ENCODE measurements at regions of chr17 and their contacts with region 1.

Region 1: GRCh38 chr17:75109407-75110233 is at the start of gene ARMC7:
- DNase-seq: peak; percentile 95
- ATAC-seq: peak; percentile 82
- H3K4me3 Mint-ChIP-seq: peak within 1 kb of the TSS; percentile 79
- H3K27ac Mint-ChIP-seq: peak within 1 kb of the TSS; percentile 92
- H3K4me1 Mint-ChIP-seq: peaks cover 28% of the 10 kb centered on the region
- H3K27me3 Mint-ChIP-seq: no peaks in the 10 kb centered on the region
- total RNA-seq, gene ARMC7: 6.7 to 7.7 TPM

Region 2: DNA sequence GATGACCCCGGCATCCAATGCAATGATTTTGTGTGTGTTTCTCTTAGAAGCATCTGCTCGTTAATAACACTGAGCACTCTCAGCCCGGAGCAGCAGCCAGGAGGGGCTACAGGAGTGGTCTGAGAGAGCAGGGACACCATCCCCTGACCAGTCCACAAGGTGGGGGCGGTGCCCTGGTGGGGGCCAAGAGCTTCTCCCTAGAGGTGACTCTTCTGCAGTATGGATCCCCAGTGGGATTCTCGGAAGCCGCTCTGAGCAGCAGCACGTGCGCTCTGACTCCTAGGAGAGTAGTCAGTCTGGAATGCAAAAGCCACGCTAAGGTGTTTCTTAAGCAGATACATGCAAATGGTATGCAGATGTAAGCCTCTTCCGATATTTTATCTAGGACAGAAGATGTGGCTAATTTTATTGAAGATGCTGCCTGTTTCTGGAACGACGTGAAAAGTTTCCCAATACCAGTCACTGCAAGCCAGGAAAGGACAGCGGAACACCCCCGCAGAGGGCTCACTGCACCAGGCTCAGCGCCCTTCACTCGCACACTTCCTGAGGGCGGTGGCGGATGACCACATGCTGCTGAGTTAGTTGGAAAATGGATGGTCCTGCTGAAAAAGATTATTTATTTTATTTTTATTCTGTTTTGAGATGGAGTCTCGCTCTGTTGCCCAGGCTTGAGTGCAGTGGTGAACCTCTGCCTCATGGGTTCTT is 226.4 kb before region 1 on chr17:
- CTCF ChIA-PET with region 1: no interaction called
- POLR2A ChIA-PET with region 1: no interaction called
- intact Hi-C with region 1: no loop called
- DNase-seq: no peak
- ATAC-seq: no peak
- H3K4me3 Mint-ChIP-seq: no peak overlapping the region
- H3K27ac Mint-ChIP-seq: no peak overlapping the region
- H3K4me1 Mint-ChIP-seq: no peaks in the 10 kb centered on the region
- H3K27me3 Mint-ChIP-seq: peaks cover 8% of the 10 kb centered on the region

Region 3: GRCh38 chr17:75046582-75047289 is 62.9 kb before region 1 on chr17 and contains the starts of genes ATP5PD and KCTD2:
- CTCF ChIA-PET with region 1: interaction called, 4 read pairs
- POLR2A ChIA-PET with region 1: no interaction called
- intact Hi-C with region 1: loop called in 1 of 2 experiments (anchors 5 kb)
- DNase-seq: peak; percentile 97
- ATAC-seq: peak; percentile 95
- H3K4me3 Mint-ChIP-seq: peak within 1 kb of the TSS; percentile 99
- H3K27ac Mint-ChIP-seq: peak within 1 kb of the TSS; percentile 94
- H3K4me1 Mint-ChIP-seq: peaks cover 37% of the 10 kb centered on the region
- H3K27me3 Mint-ChIP-seq: no peaks in the 10 kb centered on the region
- total RNA-seq, gene ATP5PD: 194 to 237 TPM
- total RNA-seq, gene KCTD2: 15.3 to 16.7 TPM

Region 4: DNA sequence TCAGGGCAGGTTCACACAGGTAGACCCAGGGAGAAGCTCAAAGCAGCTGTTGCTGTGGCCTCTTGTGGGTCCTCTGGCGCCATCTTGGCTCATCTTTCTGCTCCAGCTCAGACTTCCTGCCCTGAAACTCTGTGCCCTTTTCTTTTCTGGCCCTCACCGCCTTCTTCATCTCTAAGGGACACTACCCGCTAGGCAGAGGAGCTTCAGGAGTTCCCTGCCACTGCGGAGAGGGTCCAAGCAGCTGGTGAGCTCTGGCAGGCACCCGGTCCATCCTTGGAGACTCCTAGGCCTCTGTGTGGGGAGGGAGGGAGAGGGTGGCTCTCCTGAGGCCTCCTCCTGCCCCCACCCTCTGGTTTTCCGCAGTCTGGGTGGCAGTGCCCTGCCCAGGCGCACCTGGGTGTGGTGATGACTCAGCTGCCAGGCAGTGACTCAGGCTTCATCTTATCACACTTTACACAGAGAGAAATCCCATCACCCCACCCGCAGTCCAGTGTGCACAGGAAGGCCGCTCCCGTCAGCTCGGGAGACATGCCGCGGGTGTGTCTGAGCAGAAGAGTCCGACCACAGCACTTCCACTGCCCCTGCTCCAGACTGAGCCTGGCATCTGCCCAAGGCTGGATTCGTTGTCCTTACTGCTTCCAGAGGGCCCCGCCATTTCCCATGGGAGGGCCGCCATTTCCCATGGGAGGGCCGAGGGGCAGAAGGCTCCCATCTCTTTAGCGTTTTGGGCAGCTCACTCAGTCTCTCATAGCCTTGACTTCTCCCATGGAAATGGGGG is 14.6 kb after region 1 on chr17:
- CTCF ChIA-PET with region 1: interaction called, 72 read pairs
- POLR2A ChIA-PET with region 1: interaction called, 8 read pairs
- intact Hi-C with region 1: no loop called
- DNase-seq: peak; percentile 88
- ATAC-seq: peak; percentile 97
- H3K4me3 Mint-ChIP-seq: peak overlapping the region; percentile 44
- H3K27ac Mint-ChIP-seq: peak overlapping the region; percentile 94
- H3K4me1 Mint-ChIP-seq: peaks cover 27% of the 10 kb centered on the region
- H3K27me3 Mint-ChIP-seq: no peaks in the 10 kb centered on the region

Region 5: DNA sequence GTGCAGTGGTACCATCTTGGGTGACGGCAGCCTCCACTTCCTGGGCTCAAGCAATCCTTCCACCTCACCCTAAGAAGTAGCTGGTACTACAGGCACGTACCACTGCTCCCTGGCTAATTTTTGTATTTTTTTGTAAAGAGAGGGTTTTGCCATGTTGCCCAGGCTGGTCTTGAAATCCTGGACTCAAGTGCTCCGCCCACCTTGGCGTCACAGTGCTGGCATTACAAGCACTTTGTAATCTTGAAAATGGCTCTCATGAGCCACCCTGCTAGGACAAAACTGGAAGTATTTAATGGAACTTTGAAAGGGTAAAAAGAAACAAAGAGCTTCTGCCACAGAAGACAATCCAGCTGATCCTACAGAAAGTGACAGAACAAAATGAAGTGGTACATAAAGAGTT is 63.9 kb after region 1 on chr17:
- CTCF ChIA-PET with region 1: interaction called, 154 read pairs
- POLR2A ChIA-PET with region 1: interaction called, 10 read pairs
- intact Hi-C with region 1: loop called (anchors 1 kb)
- DNase-seq: no peak
- ATAC-seq: no peak
- H3K4me3 Mint-ChIP-seq: no peak overlapping the region
- H3K27ac Mint-ChIP-seq: no peak overlapping the region
- H3K4me1 Mint-ChIP-seq: peaks cover 14% of the 10 kb centered on the region
- H3K27me3 Mint-ChIP-seq: no peaks in the 10 kb centered on the region

Region 6: GRCh38 chr17:75205037-75205792 is 95.6 kb after region 1 on chr17 and contains the start of gene NUP85:
- CTCF ChIA-PET with region 1: interaction called, 108 read pairs
- POLR2A ChIA-PET with region 1: interaction called, 4 read pairs
- intact Hi-C with region 1: loop called (anchors 1 kb)
- DNase-seq: peak; percentile 96
- ATAC-seq: peak; percentile 86
- H3K4me3 Mint-ChIP-seq: peak within 1 kb of the TSS; percentile 91
- H3K27ac Mint-ChIP-seq: peak within 1 kb of the TSS; percentile 100
- H3K4me1 Mint-ChIP-seq: peaks cover 18% of the 10 kb centered on the region
- H3K27me3 Mint-ChIP-seq: no peaks in the 10 kb centered on the region
- total RNA-seq, gene NUP85: 130 to 160 TPM

Region 7: GRCh38 chr17:75515496-75516254 is 406.1 kb after region 1 on chr17 and contains the start of gene CASKIN2:
- CTCF ChIA-PET with region 1: no interaction called
- POLR2A ChIA-PET with region 1: no interaction called
- intact Hi-C with region 1: loop called in 1 of 2 experiments (anchors 5 kb)
- DNase-seq: peak; percentile 93
- ATAC-seq: peak; percentile 61
- H3K4me3 Mint-ChIP-seq: peak within 1 kb of the TSS; percentile 68
- H3K27ac Mint-ChIP-seq: no peak within 1 kb of the TSS
- H3K4me1 Mint-ChIP-seq: peaks cover 22% of the 10 kb centered on the region
- H3K27me3 Mint-ChIP-seq: peaks cover 3% of the 10 kb centered on the region
- total RNA-seq, gene CASKIN2: 2.9 to 3.0 TPM